ENCODE measurements at regions of chr20 and their contacts with region 1.

Region 1: GRCh38 chr20:33862709-33863403 is 51.7 kb downstream of the CHMP4B start:
- DNase-seq: peak in 5 of 6 donors; percentile 12 to 83 (median 40)
- ATAC-seq: peak; percentile 38 to 91 (median 80)
- H3K4me3 ChIP-seq: no peak overlapping the region
- H3K27ac ChIP-seq: no peak overlapping the region
- H3K4me1 ChIP-seq: peaks cover 0 to 4% (median 0%) of the 10 kb centered on the region in 3 donors
- H3K27me3 ChIP-seq: no peaks in the 10 kb centered on the region
- CTCF ChIP-seq: peak; percentile 43 to 61 (median 55)

Region 2: GRCh38 chr20:33810885-33811777 is 51.7 kb before region 1 on chr20 and contains the start of gene CHMP4B:
- intact Hi-C with region 1: no loop called
- DNase-seq: peak; percentile 99 to 100 (median 99)
- ATAC-seq: peak; percentile 93 to 96 (median 94)
- H3K4me3 ChIP-seq: peak within 1 kb of the TSS; percentile 79 to 94 (median 89)
- H3K27ac ChIP-seq: peak within 1 kb of the TSS; percentile 90 to 97 (median 93)
- H3K4me1 ChIP-seq: peaks cover 13 to 25% (median 23%) of the 10 kb centered on the region in 3 donors
- H3K27me3 ChIP-seq: no peaks in the 10 kb centered on the region
- CTCF ChIP-seq: no peak
- total RNA-seq, gene CHMP4B: 28.4 to 57.0 (median 37.2) TPM

Region 3: DNA sequence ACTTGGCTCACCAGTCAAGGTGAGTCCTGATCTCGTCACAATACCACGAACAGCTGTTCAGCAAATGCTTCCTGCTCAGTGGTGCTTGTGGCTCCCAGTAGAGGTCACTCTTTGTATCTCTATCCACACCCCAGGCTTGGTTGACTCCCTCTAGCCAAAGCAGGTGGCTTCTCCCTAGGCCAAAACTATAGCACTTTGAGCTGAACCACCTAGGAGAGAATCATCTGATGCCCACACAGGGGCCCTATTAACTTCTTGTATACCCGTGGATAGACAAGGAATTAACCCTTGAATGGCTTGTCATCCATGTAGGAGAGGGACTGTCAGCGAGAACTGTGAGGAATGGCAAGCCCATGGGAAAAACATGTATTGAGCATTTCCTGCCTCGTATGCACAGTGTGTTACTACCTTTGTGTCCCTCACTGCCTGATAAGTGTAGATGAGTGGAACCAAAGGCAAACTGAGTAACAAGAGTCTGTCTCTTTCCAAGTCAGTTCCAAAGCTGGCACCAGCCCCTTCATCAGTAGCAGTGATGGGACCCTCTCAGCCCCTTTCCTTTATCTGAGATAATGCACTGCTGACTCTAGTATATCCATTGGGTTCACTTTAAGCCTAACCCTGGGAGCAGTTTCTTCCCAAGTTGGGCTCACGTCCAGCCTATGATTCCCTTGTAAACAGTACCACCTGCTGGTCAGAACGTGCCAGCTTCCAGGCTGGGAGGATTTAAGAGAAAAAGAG is 206.7 kb after region 1 on chr20:
- intact Hi-C with region 1: loop called in 2 of 3 experiments (anchors 10 kb)
- DNase-seq: peak; percentile 57 to 85 (median 75)
- ATAC-seq: peak; percentile 92 to 95 (median 94)
- H3K4me3 ChIP-seq: no peak overlapping the region
- H3K27ac ChIP-seq: peak overlapping the region in 1 of 4 donors; percentile 24
- H3K4me1 ChIP-seq: peaks cover 0 to 10% (median 0%) of the 10 kb centered on the region in 3 donors
- H3K27me3 ChIP-seq: no peaks in the 10 kb centered on the region
- CTCF ChIP-seq: peak; percentile 56 to 80 (median 78)

Region 4: DNA sequence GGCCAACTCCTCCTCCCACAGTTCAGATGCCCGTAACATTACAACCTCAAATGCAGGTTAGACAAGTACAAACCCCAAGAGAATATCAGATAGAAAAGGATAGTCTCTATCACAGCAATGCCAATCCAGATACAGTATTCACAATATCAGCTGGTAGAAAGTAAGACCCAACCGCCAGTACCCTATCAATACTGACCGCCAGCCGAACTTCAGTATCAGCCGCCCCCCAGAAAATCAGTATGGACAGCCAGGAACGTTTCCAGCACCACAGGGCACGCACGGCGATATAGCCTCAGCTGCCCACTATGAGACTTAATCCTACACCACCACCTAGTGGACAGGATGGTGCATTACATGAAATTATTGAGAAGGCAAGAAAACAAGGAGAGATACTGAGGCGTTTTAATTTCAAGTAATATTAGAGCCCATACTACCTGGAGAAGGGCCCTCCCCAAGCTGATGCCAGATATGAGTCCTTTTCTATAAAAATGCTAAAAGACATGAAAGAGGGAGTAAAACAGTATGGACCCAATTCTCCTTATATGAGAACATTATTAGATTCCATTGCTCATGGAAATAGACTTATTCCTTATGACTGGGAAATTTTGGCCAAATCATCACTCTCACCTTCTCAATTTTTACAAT is 266.8 kb after region 1 on chr20:
- intact Hi-C with region 1: loop called in 1 of 3 experiments (anchors 5 kb)
- DNase-seq: peak; percentile 47 to 67 (median 58)
- ATAC-seq: peak; percentile 92 to 100 (median 98)
- H3K4me3 ChIP-seq: peak overlapping the region in 2 of 4 donors; percentile 21 to 32
- H3K27ac ChIP-seq: no peak overlapping the region
- H3K4me1 ChIP-seq: no peaks in the 10 kb centered on the region
- H3K27me3 ChIP-seq: no peaks in the 10 kb centered on the region
- CTCF ChIP-seq: peak; percentile 63 to 80 (median 76)

Measured in pancreas (tissue), 10 donors.